Cardiac septum (tissue), 1 donor: ENCODE measurements at regions of chr7 and their contacts with region 1.

Region 1: DNA sequence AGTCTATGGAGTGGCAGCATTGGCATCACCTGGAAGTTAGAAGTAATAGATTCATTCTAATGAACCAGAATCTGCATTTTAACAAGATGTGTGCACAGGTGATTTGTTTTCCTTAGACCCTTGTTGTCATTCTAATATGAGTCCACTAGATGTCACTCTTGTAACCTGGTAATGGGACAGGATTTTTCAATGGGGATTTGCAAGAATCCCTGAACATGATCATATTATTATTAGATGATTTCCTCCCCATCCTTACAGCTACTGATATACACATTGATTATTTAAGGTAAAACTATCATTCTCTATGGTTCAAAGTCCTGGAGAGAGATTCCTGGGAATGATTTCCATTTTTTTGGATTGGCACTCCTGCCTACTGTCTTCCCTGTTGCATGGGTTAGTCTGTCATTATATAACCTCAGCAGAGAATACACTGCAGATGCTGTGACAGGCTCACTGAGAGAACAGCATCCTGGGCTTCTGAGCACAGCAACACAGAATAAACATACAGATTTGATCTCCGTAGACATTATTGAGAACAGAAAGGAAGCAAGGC is 194.9 kb downstream of the SUGCT start:
- DNase-seq: no peak

Region 2: DNA sequence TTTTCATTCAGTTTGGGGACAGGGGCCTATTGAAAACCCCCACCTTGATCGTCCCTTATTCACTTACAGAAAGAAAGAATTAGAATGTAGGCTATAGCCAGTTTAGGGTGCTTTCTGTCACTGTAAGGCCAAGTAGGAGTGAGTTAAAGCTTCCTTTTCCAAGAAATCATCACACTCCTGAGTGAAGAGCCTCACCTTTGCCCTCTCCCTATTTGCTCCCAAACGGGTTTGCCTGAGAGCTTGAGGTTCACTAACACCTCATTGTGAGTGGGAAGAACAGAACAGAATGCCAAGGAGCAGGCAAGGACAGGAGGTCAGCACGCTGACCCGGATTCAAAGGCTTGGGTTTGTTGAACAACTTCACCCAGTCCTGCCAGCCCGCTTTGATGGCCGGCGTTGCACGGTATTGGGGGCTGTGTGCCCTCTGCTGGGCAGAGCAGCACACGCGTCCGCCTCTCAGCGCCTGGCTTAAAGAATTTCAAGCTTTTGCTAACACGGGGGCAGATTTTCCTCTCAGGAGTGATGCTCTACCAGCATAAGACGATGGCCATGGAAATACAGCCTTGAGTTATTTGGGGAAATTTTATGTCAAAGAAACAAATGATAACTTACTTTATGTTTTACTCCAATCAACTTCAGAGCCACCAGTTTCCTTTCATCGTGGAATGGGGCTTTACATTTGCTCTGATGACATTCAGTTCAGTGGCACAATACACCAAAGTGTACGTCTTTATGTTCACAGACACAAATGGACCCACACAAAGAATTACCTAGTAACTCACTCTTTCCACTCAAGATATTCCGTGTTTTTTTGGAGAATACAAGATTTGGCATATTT is 275.1 kb after region 1 on chr7:
- intact Hi-C with region 1: loop called (anchors 2 kb)
- DNase-seq: no peak

Region 3: GRCh38 chr7:41731492-41732435 is 1402.1 kb after region 1 on chr7:
- intact Hi-C with region 1: loop called (anchors 5 kb)
- DNase-seq: no peak